Panc1 (cell line): ENCODE measurements at regions of chr16 and their contacts with region 1.

Region 1: GRCh38 chr16:85501900-85502299 is 111.2 kb upstream of the GSE1 start:
- DNase-seq: no peak
- ATAC-seq: no peak
- H3K4me3 ChIP-seq: no peak overlapping the region
- H3K27ac ChIP-seq: no peak overlapping the region
- H3K4me1 ChIP-seq: no peaks in the 10 kb centered on the region
- H3K27me3 ChIP-seq: no peaks in the 10 kb centered on the region
- CTCF ChIP-seq: no peak

Region 2: DNA sequence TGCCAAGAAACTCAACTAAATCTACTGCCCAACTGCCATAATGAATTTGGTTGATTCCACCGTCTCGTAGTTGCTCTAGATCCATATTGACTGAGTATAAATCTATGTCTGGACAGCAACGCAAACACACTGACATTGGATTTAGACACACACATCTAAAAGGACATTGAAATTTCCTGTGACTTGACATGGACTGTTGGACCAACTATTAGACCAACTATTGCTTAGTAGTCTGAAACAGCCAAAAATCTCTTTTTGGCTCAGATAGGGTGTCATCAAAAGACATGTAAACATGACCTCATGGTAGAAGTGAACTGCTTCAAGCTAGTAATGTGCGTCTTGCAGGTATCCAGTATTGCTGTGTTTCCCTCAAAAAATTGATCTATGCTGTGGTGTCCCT is 443.0 kb before region 1 on chr16:
- CTCF ChIA-PET with region 1: no interaction called
- POLR2A ChIA-PET with region 1: interaction called, 12 read pairs
- in situ Hi-C with region 1: no loop called
- intact Hi-C with region 1: no loop called
- DNase-seq: no peak
- ATAC-seq: no peak
- H3K4me3 ChIP-seq: no peak overlapping the region
- H3K27ac ChIP-seq: no peak overlapping the region
- H3K4me1 ChIP-seq: peaks cover 9% of the 10 kb centered on the region
- H3K27me3 ChIP-seq: no peaks in the 10 kb centered on the region
- CTCF ChIP-seq: no peak

Region 3: DNA sequence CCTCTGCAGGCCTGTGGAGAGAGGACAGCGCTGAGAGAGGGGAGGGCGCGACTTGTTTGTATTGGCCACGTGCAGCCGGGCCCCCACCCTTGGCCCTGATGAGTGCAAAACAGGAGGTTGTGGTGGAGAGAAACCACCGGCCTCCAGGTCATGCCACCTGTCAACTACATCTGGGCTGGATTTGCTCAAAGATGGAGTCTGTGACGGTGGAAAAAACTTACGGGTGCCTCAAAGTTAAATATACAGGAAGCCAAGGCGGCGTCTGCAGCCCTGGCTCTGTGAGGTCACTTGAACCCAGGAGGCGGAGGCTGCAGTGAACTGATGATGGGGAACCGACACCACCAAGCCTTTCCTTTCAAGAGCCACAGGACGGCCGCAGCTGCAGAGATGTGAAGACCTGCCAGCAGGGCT is 233.3 kb after region 1 on chr16:
- CTCF ChIA-PET with region 1: no interaction called
- POLR2A ChIA-PET with region 1: no interaction called
- in situ Hi-C with region 1: no loop called
- intact Hi-C with region 1: no loop called
- DNase-seq: no peak
- ATAC-seq: no peak
- H3K4me3 ChIP-seq: no peak overlapping the region
- H3K27ac ChIP-seq: no peak overlapping the region
- H3K4me1 ChIP-seq: no peaks in the 10 kb centered on the region
- H3K27me3 ChIP-seq: no peaks in the 10 kb centered on the region
- CTCF ChIP-seq: no peak